ENCODE measurements at regions of chr6 and their contacts with region 1.

Region 1: GRCh38 chr6:161673026-161673425 is 399.2 kb upstream of the AGPAT4 start:
- DNase-seq: no peak

Region 2: GRCh38 chr6:161511447-161512095 is 161.5 kb before region 1 on chr6:
- intact Hi-C with region 1: no loop called
- DNase-seq: no peak

Region 3: DNA sequence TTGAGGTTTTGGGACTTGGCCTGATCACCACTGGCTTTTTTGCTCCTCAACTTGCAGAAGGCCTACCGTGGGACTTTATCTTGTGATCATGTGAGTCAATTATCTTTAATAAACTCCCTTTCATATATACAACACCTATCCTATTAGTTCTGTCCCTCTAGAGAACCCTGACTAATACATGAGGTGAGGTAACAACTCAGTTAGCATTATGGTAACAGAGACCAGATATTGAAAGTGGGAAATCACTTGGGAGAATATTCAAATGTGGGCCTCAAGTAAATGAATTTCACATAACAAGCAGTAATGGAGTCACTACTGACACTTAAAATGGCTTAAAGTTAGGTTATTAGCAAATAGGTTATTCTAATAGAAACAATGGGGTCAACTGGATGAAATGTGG is 38.9 kb after region 1 on chr6:
- intact Hi-C with region 1: loop called in 1 of 2 experiments (anchors 2 kb)
- DNase-seq: no peak

Region 4: DNA sequence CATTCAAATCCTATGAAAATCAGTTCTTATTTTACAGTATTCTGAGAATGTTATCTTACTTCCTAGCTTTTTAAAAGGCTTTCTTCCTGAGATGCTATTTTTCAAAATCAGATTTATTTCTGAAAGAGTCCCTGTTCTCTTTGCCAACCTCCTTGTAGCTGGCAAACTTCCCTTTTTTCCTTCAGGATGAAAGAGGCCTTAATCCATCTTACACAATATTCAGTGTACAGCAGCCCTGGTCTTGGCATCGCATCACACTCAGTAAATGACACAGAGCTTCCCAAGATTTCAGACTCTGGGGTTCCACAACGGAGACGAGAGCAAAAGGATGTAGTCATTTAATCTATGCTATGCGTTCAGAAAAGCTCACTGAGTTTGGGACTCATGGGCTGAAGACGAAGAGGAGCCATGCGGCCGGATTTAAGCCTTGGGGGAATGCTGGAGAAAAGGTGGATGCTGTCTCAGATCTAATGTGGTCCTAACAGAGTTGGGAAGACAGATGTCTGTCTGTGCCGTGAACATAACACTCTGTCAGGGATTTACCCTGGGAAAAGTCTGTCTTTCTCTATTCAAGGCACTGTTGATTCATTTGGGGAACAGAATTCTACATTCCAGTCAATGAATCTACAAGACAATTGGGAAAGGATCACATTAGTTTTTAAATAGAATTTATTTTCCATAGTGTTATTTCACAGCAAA is 217.3 kb after region 1 on chr6:
- intact Hi-C with region 1: no loop called
- DNase-seq: no peak